ENCODE measurements at regions of chr7 and their contacts with region 1.

Region 1: GRCh38 chr7:127911968-127912511 is 119.2 kb downstream of the LRRC4 start:
- DNase-seq: peak; percentile 64
- H3K4me3 ChIP-seq: peak overlapping the region; percentile 30
- H3K27ac ChIP-seq: peak overlapping the region; percentile 74
- H3K4me1 ChIP-seq: peaks cover 37% of the 10 kb centered on the region
- CTCF ChIP-seq: no peak

Region 2: DNA sequence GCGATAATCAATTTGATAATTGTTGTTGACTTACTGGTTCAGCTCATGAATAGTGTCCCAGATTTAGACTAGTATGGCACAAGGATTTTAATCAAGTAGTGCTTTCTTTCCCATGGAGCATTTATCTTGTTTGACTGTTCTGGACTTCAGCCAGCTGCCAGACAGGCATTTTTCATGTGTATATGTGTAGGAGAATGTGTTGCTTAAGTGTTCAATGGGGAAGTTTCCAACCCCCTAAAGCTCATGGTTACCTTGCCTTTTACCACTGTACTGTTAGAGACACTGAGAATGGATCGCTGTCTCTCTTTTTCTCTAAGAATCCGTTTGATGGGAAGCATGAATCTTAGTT is 15.3 kb after region 1 on chr7:
- CTCF ChIA-PET with region 1: interaction called, 4 read pairs
- POLR2A ChIA-PET with region 1: interaction called, 24 read pairs
- intact Hi-C with region 1: no loop called
- DNase-seq: no peak
- H3K4me3 ChIP-seq: no peak overlapping the region
- H3K27ac ChIP-seq: no peak overlapping the region
- H3K4me1 ChIP-seq: peaks cover 35% of the 10 kb centered on the region
- CTCF ChIP-seq: no peak

Region 3: GRCh38 chr7:127943541-127944521 is 31.8 kb after region 1 on chr7:
- CTCF ChIA-PET with region 1: no interaction called
- POLR2A ChIA-PET with region 1: no interaction called
- intact Hi-C with region 1: no loop called
- DNase-seq: no peak
- H3K4me3 ChIP-seq: no peak overlapping the region
- H3K27ac ChIP-seq: no peak overlapping the region
- H3K4me1 ChIP-seq: peaks cover 9% of the 10 kb centered on the region
- CTCF ChIP-seq: no peak